CD8-positive, alpha-beta T cell (primary cell): ENCODE measurements at regions of chr14 and their contacts with region 1.

Region 1: DNA sequence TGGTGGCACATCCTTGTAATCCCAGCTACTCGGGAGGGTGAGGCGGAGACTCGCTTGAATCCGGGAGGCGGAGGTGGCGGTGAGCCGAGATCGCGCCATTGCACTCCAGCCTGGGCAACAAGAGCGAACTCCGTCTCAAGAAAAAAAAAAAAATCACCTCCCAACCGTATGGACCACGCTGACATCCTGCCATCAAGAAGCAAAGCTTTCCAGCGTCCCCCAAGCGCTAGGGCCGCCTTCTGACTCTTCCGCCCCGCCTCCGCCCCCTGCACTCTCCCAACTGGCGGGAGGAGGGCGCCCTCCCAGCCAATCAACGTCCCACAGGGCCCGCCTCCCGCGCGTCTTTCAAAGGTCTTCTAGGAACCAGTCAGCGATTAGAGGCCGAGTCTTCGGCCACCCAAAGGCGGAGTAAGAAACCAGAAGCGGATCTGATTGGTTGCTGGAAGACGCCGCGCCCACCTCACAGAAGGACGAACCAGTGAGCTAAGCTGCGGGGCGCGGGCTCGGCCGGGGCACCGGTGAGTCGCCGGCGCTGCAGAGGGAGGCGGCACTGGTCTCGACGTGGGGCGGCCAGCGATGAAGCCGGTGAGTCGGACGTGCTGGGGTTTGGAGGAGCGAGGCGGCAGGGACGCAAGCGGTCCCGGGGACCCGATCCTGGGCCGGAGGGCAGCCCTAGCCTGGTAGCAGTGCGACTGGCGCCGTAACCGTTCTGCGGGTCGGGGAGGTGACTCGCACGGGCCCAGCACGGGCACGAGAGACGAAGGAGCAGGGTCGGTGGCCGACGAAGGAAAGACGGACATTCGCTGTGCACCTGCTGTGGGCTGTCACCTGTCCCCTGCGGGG is at the start of gene CDKN3:
- DNase-seq: peak; percentile 94 to 98 (median 96)
- ATAC-seq: peak; percentile 95
- H3K4me3 ChIP-seq: peak within 1 kb of the TSS; percentile 80 to 96
- H3K4me3 Mint-ChIP-seq: peak within 1 kb of the TSS; percentile 86
- H3K27ac ChIP-seq: peak within 1 kb of the TSS; percentile 23 to 46
- H3K27ac Mint-ChIP-seq: peak within 1 kb of the TSS; percentile 47
- H3K4me1 ChIP-seq: peaks cover 4% of the 10 kb centered on the region
- H3K4me1 Mint-ChIP-seq: peaks cover 9% of the 10 kb centered on the region
- H3K27me3 ChIP-seq: no peaks in the 10 kb centered on the region
- H3K27me3 Mint-ChIP-seq: no peaks in the 10 kb centered on the region
- CTCF ChIP-seq: no peak
- total RNA-seq, gene CDKN3: 0.56 to 0.68 TPM

Region 2: DNA sequence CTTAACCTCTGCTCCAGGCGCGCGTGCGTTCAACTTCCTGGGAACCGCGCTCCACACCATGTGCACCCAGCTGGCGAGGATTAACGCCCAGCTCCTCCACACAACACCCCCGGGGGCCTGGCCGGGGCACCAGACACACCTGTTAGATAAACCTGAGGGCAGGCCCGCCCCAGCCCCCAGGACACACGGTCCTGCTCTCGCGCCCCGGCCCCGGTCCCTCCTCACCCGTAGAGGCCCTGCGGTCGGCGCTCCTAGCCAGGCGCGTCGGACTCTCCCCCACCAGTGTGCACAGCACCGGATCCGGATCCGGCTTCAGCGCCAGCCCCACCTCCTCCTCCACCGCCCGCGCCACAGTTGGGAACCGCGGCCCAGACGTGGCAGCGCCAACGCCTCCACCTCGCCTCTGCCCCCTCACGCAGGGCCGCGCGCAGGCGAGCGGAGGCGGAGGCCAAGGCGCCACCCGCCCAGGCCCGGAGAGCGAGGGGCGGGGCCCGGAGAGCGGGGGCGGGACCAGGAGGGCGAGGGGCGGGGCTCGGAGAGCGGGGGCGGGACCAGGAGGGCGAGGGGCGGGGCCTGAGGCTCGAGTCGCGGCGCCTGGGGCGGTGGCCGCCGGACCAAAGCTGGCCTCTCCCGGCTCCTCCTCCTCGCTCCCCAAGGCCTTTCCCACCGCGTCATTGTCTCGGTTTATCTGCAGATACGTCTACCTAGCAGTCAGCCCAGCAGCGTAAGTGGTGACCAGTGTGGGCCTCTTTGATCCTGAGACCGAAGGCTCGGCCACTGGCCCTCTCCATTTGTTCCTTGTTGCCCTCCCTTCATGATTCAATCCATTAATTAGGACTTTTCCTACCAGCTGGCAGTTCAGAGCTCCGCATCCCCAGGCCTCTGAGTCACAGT is 1605.3 kb before region 1 on chr14 and contains the start of gene GNPNAT1:
- CTCF ChIA-PET with region 1: no interaction called
- POLR2A ChIA-PET with region 1: no interaction called
- intact Hi-C with region 1: loop called in 1 of 2 experiments (anchors 2 kb)
- DNase-seq: peak; percentile 80 to 97 (median 88)
- ATAC-seq: peak; percentile 96
- H3K4me3 ChIP-seq: peak within 1 kb of the TSS; percentile 78 to 85
- H3K4me3 Mint-ChIP-seq: peak within 1 kb of the TSS; percentile 93
- H3K27ac ChIP-seq: peak within 1 kb of the TSS; percentile 65 to 74
- H3K27ac Mint-ChIP-seq: peak within 1 kb of the TSS; percentile 89
- H3K4me1 ChIP-seq: peaks cover 20% of the 10 kb centered on the region
- H3K4me1 Mint-ChIP-seq: peaks cover 40% of the 10 kb centered on the region
- H3K27me3 ChIP-seq: no peaks in the 10 kb centered on the region
- H3K27me3 Mint-ChIP-seq: no peaks in the 10 kb centered on the region
- CTCF ChIP-seq: no peak
- total RNA-seq, gene GNPNAT1: 5.6 to 7.5 TPM

Region 3: DNA sequence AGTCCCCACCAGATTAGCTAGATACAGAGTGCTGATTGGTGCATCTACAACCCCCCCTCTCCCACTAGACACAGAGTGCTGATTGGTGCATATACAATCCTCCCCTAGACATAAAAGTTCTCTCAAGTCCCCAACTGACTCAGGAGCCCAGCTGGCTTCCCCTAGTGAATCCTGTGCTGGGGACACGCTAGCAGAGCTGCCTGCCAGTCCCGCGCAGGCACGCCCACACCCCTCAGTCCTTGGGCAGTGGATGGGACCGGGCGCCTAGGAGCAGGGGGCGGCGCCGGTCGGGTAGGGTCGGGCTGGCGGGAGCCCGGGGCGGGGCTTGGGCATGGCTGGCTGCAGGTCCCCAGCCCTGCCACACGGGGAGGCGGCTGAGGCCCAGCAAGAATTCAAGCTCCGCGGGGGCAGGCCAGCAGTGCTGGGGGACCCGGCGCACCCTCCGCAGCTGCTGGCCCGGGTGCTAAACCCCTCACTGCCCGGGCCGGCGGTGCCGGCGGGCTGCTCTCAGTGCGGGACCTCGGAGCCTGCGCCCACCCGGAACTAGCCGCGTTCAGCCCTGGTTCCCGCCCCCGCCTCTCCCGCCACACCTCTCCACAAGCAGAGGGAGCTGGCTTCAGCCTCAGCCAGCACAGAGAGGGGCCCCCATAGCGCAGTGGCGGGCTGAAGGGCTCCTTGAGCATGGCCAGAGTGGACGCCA is 1179.3 kb before region 1 on chr14:
- CTCF ChIA-PET with region 1: no interaction called
- POLR2A ChIA-PET with region 1: no interaction called
- intact Hi-C with region 1: loop called in 1 of 2 experiments (anchors 5 kb)
- DNase-seq: peak; percentile 48 to 81 (median 71)
- ATAC-seq: peak; percentile 95
- H3K4me3 ChIP-seq: peak overlapping the region; percentile 61 to 65
- H3K4me3 Mint-ChIP-seq: peak overlapping the region; percentile 91
- H3K27ac ChIP-seq: no peak overlapping the region
- H3K27ac Mint-ChIP-seq: peak overlapping the region; percentile 53
- H3K4me1 ChIP-seq: peaks cover 6% of the 10 kb centered on the region
- H3K4me1 Mint-ChIP-seq: peaks cover 9% of the 10 kb centered on the region
- H3K27me3 ChIP-seq: no peaks in the 10 kb centered on the region
- H3K27me3 Mint-ChIP-seq: no peaks in the 10 kb centered on the region
- CTCF ChIP-seq: peak; percentile 48

Region 4: DNA sequence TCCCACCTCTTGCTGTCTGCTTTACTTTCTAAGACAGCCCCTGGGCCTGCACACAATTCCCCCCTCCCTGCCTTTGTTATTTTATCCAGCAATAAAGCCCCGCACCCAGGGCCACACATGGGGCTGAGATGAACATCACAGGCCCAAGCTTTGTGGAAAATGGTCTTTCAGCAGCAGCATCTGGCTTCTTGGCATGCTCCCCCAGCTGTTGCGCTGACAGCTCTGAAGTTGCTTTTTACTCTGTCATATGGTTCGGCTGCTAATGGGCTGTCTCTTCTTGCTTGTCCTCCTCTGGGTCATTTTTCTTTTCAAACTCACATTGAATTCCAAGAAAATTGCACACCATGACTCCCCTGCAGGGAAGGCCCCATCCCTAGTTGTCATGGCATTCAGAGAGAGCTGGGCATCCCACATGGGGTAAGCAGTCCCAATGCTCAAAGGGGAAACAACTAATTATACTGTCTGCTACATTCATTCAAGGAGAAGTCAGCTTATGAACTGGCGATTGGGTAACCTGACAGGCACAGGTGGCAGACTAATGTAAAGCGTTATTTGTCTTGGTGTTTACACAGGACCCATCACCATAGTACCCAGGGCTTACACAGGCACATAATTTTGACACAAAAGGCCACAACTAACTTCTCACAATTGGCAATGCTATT is 73.9 kb before region 1 on chr14:
- CTCF ChIA-PET with region 1: no interaction called
- POLR2A ChIA-PET with region 1: no interaction called
- intact Hi-C with region 1: no loop called
- DNase-seq: no peak
- ATAC-seq: no peak
- H3K4me3 ChIP-seq: no peak overlapping the region
- H3K4me3 Mint-ChIP-seq: no peak overlapping the region
- H3K27ac ChIP-seq: no peak overlapping the region
- H3K27ac Mint-ChIP-seq: no peak overlapping the region
- H3K4me1 ChIP-seq: no peaks in the 10 kb centered on the region
- H3K4me1 Mint-ChIP-seq: no peaks in the 10 kb centered on the region
- H3K27me3 ChIP-seq: no peaks in the 10 kb centered on the region
- H3K27me3 Mint-ChIP-seq: peaks cover 8% of the 10 kb centered on the region
- CTCF ChIP-seq: no peak

Region 5: GRCh38 chr14:54440873-54441868 is 44.5 kb after region 1 on chr14 and contains the start of gene CNIH1:
- CTCF ChIA-PET with region 1: interaction called, 9 read pairs
- POLR2A ChIA-PET with region 1: interaction called, 3 read pairs
- intact Hi-C with region 1: loop called (anchors 1 kb)
- DNase-seq: peak; percentile 88 to 98 (median 93)
- ATAC-seq: peak; percentile 92
- H3K4me3 ChIP-seq: peak within 1 kb of the TSS; percentile 45 to 66
- H3K4me3 Mint-ChIP-seq: peak within 1 kb of the TSS; percentile 93
- H3K27ac ChIP-seq: peak within 1 kb of the TSS; percentile 76 to 81
- H3K27ac Mint-ChIP-seq: peak within 1 kb of the TSS; percentile 96
- H3K4me1 ChIP-seq: peaks cover 18% of the 10 kb centered on the region
- H3K4me1 Mint-ChIP-seq: peaks cover 41% of the 10 kb centered on the region
- H3K27me3 ChIP-seq: no peaks in the 10 kb centered on the region
- H3K27me3 Mint-ChIP-seq: no peaks in the 10 kb centered on the region
- CTCF ChIP-seq: peak; percentile 99
- total RNA-seq, gene CNIH1: 49.2 to 55.6 TPM

Region 6: DNA sequence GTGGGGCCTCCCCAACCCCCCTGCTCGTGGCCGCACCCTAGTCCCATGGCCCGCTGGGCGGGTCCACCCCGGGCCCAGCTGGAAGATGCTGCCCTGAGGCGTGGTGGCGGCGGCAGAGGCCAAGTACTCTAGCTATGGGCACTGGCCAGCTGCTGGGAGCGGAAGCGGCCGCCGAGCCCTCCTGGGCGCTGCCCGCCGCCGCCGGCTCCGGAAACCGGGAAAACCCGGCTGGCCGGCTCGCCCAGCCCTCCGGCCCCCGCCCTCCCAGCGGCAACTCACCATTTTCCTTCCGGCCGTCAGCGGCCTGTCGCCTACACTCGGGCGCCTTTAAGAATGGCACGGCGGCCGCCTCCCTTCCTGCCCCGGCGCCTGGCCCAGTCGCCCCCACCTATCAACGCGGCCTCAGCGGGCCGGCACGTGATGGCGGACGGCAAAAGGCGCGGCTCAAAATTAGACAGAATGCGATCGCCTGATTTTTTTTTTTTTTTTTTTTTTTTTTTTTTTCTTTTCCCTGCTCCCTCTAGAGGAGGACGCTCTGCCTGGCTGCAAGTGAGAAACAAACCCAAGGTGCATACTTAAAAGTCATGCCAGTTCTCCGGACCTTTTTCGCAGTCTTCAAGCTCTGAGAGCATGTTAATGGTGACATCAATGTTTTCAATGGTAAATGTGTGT is 92.1 kb after region 1 on chr14 and contains the start of gene GMFB:
- CTCF ChIA-PET with region 1: interaction called, 3 read pairs
- POLR2A ChIA-PET with region 1: interaction called, 3 read pairs
- intact Hi-C with region 1: loop called (anchors 1 to 2 kb)
- DNase-seq: peak; percentile 77 to 94 (median 89)
- ATAC-seq: peak; percentile 96
- H3K4me3 ChIP-seq: peak within 1 kb of the TSS; percentile 73 to 92
- H3K4me3 Mint-ChIP-seq: peak within 1 kb of the TSS; percentile 90
- H3K27ac ChIP-seq: peak within 1 kb of the TSS; percentile 66 to 89
- H3K27ac Mint-ChIP-seq: peak within 1 kb of the TSS; percentile 94
- H3K4me1 ChIP-seq: peaks cover 38% of the 10 kb centered on the region
- H3K4me1 Mint-ChIP-seq: peaks cover 61% of the 10 kb centered on the region
- H3K27me3 ChIP-seq: no peaks in the 10 kb centered on the region
- H3K27me3 Mint-ChIP-seq: no peaks in the 10 kb centered on the region
- CTCF ChIP-seq: peak; percentile 17
- total RNA-seq, gene GMFB: 33.7 to 34.0 TPM

Region 7: DNA sequence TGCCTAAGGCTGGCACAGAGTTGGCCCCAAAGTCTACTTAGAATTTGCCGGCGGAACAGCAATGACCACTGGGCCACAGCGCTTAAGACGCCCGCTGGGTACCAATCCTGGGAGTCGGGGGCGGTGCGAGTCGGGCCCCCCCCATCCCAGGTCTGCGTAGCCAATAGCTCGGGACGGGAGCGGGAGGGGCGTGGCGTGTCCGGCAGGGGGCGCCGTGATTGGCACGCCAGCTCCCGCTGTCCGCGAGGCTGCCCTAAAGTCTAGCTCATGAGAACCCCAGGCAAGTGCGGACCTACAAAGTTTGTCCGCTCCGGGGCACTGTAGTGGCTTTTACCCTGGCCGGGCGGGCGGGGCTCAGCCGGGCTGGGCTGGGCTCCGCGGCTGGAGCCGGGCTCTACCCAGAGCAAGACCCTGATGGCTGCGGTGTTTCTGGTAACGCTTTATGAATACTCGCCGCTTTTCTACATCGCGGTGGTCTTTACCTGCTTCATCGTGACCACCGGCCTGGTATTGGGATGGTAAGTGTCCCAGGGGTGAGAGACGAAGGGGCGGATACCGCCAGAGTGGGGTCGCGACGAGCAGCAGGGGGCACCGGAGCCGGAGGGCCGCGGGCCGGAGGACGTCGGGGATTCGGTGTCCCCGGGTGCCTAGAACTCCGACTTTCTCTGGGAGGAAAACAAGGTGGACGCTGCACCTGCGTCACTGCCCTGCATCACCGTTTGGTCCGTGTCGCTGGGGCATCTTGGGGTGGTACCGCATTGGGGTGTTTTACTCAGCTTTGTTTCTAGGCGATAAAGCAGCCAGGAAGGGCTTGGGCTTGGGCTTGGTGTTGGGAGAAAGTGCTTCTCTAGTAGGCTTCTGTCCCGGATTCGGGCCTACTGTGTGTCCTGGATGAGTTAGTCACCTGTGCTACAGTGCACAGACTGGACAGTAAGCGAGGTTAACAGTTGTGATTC is 113.1 kb after region 1 on chr14 and contains the start of gene CGRRF1:
- CTCF ChIA-PET with region 1: no interaction called
- POLR2A ChIA-PET with region 1: interaction called, 3 read pairs
- intact Hi-C with region 1: loop called (anchors 1 to 5 kb)
- DNase-seq: peak; percentile 90 to 98 (median 96)
- ATAC-seq: peak; percentile 95
- H3K4me3 ChIP-seq: peak within 1 kb of the TSS; percentile 92 to 99
- H3K4me3 Mint-ChIP-seq: peak within 1 kb of the TSS; percentile 96
- H3K27ac ChIP-seq: peak within 1 kb of the TSS; percentile 73 to 92
- H3K27ac Mint-ChIP-seq: peak within 1 kb of the TSS; percentile 92
- H3K4me1 ChIP-seq: peaks cover 31% of the 10 kb centered on the region
- H3K4me1 Mint-ChIP-seq: peaks cover 51% of the 10 kb centered on the region
- H3K27me3 ChIP-seq: no peaks in the 10 kb centered on the region
- H3K27me3 Mint-ChIP-seq: peaks cover 4% of the 10 kb centered on the region
- CTCF ChIP-seq: peak; percentile 64
- total RNA-seq, gene CGRRF1: 59.6 to 59.9 TPM

Region 8: GRCh38 chr14:55191203-55192053 is 794.7 kb after region 1 on chr14 and contains the start of gene DLGAP5:
- CTCF ChIA-PET with region 1: no interaction called
- POLR2A ChIA-PET with region 1: no interaction called
- intact Hi-C with region 1: loop called in 1 of 2 experiments (anchors 2 kb)
- DNase-seq: peak; percentile 71 to 96 (median 85)
- ATAC-seq: peak; percentile 98
- H3K4me3 ChIP-seq: peak within 1 kb of the TSS; percentile 66 to 76
- H3K4me3 Mint-ChIP-seq: peak within 1 kb of the TSS; percentile 92
- H3K27ac ChIP-seq: peak within 1 kb of the TSS; percentile 9 to 52
- H3K27ac Mint-ChIP-seq: peak within 1 kb of the TSS; percentile 22
- H3K4me1 ChIP-seq: peaks cover 11% of the 10 kb centered on the region
- H3K4me1 Mint-ChIP-seq: peaks cover 12% of the 10 kb centered on the region
- H3K27me3 ChIP-seq: no peaks in the 10 kb centered on the region
- H3K27me3 Mint-ChIP-seq: no peaks in the 10 kb centered on the region
- CTCF ChIP-seq: no peak
- total RNA-seq, gene DLGAP5: 0.54 TPM in 1 of 2 experiments, not detected in the other